Esophagus squamous epithelium (tissue), 5 donors: ENCODE measurements at regions of chr12 and their contacts with region 1.

Region 1: DNA sequence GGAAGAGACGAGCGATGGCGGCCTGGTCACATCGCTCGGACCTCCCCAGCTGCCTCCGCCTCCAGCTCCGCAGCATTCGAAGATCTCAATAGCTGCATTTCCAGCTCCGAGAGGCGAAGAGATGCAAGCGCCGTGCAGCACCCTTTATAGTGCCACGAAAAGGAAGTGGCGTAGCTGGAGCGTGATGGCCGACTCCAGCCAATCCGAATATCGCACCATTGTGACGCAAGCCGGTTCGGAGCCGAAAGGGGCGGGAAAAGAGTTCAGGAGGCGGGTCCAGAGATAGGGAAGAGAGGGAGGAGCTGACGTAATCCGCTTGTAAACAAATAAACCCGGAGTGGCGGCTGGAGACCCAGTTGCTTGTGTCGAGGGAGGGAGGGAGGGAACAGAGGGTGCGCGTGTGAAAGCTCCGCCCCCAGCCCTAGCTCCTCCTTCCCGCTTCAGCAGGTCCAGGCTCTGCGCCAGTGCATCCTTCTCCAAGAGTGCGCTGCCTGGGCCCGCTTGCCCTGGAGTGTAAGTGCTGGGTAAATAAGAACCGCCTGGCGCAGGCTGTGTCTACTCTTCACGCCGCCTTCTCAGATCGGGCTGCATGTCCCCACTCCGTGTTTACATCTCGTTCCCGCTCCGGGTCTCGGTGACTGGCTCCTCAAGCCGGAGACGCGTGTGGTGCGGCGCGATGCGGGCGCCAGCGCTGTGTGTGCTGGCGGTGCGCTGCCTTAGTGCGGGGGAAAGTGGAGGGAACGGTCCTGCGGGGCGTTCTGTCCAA is at the start of gene BTG1:
- DNase-seq: peak; percentile 98
- H3K4me3 ChIP-seq: peak within 1 kb of the TSS; percentile 83 to 100 (median 94)
- H3K27ac ChIP-seq: peak within 1 kb of the TSS; percentile 98 to 100 (median 100)
- H3K4me1 ChIP-seq: peaks cover 0 to 54% (median 0%) of the 10 kb centered on the region in 3 donors
- H3K27me3 ChIP-seq: no peaks in the 10 kb centered on the region
- CTCF ChIP-seq: peak in 3 of 6 experiments; percentile 6 to 33 (median 13)
- POLR2A ChIP-seq: peak; percentile 84 to 100 (median 97)
- total RNA-seq, gene BTG1: 18.3 to 42.7 (median 35.3) TPM

Region 2: GRCh38 chr12:91382081-91382543 is 763.8 kb before region 1 on chr12:
- intact Hi-C with region 1: loop called (anchors 5 kb)
- DNase-seq: no peak
- H3K4me3 ChIP-seq: peak overlapping the region; percentile 24 to 61 (median 40)
- H3K27ac ChIP-seq: peak overlapping the region in 3 of 4 donors; percentile 59 to 74 (median 69)
- H3K4me1 ChIP-seq: peaks cover 0 to 27% (median 0%) of the 10 kb centered on the region in 3 donors
- H3K27me3 ChIP-seq: no peaks in the 10 kb centered on the region
- CTCF ChIP-seq: peak; percentile 77 to 89 (median 86)
- POLR2A ChIP-seq: no peak

Region 3: GRCh38 chr12:91811481-91812287 is 334.2 kb before region 1 on chr12:
- intact Hi-C with region 1: loop called (anchors 5 kb)
- DNase-seq: no peak
- H3K4me3 ChIP-seq: no peak overlapping the region
- H3K27ac ChIP-seq: no peak overlapping the region
- H3K4me1 ChIP-seq: peaks cover 0 to 8% (median 0%) of the 10 kb centered on the region in 3 donors
- H3K27me3 ChIP-seq: no peaks in the 10 kb centered on the region
- CTCF ChIP-seq: peak; percentile 65 to 87 (median 72)
- POLR2A ChIP-seq: no peak